Activated CD4-positive, alpha-beta T cell treated with anti-CD3 and anti-CD28 coated beads, Interleukin-2, amount 10 ng/mL, durations not matched to agents 7 days and 5 days (primary cell): ENCODE measurements at regions of chr12 and their contacts with region 1.

Region 1: GRCh38 chr12:64796208-64796845 is 28.1 kb upstream of the TBC1D30 start:
- DNase-seq: peak; percentile 82
- H3K4me3 Mint-ChIP-seq: no peak overlapping the region
- H3K27ac Mint-ChIP-seq: no peak overlapping the region
- H3K4me1 Mint-ChIP-seq: no peaks in the 10 kb centered on the region
- H3K27me3 Mint-ChIP-seq: peaks cover 22% of the 10 kb centered on the region

Region 2: DNA sequence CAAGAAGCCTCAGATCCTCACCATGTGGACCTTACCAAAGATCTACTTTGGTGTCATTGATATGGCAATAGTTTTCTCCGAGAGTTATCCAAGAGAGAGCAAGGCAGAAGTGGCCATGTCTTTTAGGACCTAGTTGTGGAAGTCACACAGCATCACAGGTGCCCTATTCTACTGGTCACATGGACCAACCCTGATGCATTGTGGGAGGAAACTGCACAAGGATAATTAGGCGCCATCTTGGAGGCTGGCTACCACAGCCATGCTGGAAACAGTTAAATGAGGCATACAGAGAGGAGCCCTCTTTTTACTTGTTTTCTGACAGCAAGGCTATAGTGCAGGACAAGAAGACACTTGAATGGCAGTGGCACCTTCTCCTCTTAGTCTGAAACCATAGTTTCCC is 86.9 kb before region 1 on chr12:
- CTCF ChIA-PET with region 1: no interaction called
- POLR2A ChIA-PET with region 1: no interaction called
- DNase-seq: no peak
- H3K4me3 Mint-ChIP-seq: no peak overlapping the region
- H3K27ac Mint-ChIP-seq: no peak overlapping the region
- H3K4me1 Mint-ChIP-seq: peaks cover 16% of the 10 kb centered on the region
- H3K27me3 Mint-ChIP-seq: no peaks in the 10 kb centered on the region

Region 3: GRCh38 chr12:64785838-64786237 is 10.5 kb before region 1 on chr12:
- CTCF ChIA-PET with region 1: interaction called, 10 read pairs
- POLR2A ChIA-PET with region 1: no interaction called
- DNase-seq: no peak
- H3K4me3 Mint-ChIP-seq: no peak overlapping the region
- H3K27ac Mint-ChIP-seq: no peak overlapping the region
- H3K4me1 Mint-ChIP-seq: peaks cover 11% of the 10 kb centered on the region
- H3K27me3 Mint-ChIP-seq: peaks cover 47% of the 10 kb centered on the region